CD14-positive monocyte (primary cell): ENCODE measurements at regions of chr1 and their contacts with region 1.

Region 1: DNA sequence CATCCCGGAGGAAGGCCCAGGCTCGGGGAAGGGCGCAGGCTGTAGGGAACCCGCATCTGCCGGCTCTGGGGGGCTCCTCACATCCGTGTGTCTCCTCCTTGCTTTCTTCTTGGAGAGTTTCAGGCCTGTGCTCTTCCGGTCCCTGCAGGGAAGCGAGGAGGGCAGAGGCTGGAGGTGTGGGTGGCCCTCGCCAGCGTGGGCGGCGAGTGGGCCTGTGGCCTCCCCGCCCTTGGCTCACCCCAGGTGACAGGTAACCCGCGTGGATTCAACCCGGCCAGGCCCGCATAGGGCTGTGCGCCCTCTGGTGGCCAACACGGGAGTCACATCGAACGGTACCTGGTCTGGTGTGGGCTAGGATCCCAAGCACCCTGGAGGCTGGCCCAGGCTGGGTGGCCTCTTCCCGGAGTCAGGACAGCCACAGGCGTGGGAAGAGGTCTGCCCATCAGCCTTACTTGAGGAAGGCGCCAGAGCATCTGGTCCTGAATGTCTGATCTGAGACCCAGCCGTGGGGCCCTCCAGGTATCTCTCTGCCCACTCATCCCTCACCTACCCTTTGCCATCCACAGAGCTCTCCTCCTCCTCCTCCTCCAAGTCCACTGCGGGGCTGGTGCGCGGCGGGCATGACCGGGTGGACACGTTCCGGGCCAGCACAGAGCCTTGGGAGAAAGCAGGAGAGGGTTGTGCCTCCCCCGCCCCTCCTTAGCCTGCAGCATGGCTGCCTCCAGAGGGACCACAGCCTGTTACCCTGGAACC is 9.6 kb upstream of the TNFRSF25 start:
- DNase-seq: peak; percentile 14 to 43 (median 33)
- H3K4me3 ChIP-seq: no peak overlapping the region
- H3K4me3 Mint-ChIP-seq: no peak overlapping the region
- H3K27ac ChIP-seq: no peak overlapping the region
- H3K27ac Mint-ChIP-seq: peak overlapping the region in 1 of 7 donors; percentile 68
- H3K4me1 ChIP-seq: no peaks in the 10 kb centered on the region
- H3K4me1 Mint-ChIP-seq: no peaks in the 10 kb centered on the region
- H3K27me3 ChIP-seq: no peaks in the 10 kb centered on the region
- H3K27me3 Mint-ChIP-seq: peaks cover 6 to 9% (median 6%) of the 10 kb centered on the region in 3 donors
- CTCF ChIP-seq: peak; percentile 97

Region 2: GRCh38 chr1:6770751-6771440 is 295.3 kb after region 1 on chr1:
- intact Hi-C with region 1: no loop called
- DNase-seq: no peak
- H3K4me3 ChIP-seq: no peak overlapping the region
- H3K4me3 Mint-ChIP-seq: no peak overlapping the region
- H3K27ac ChIP-seq: no peak overlapping the region
- H3K27ac Mint-ChIP-seq: no peak overlapping the region
- H3K4me1 ChIP-seq: no peaks in the 10 kb centered on the region
- H3K4me1 Mint-ChIP-seq: peaks cover 4% of the 10 kb centered on the region
- H3K27me3 ChIP-seq: no peaks in the 10 kb centered on the region
- H3K27me3 Mint-ChIP-seq: peaks cover 5 to 11% (median 9%) of the 10 kb centered on the region in 3 donors
- CTCF ChIP-seq: no peak

Region 3: GRCh38 chr1:7002728-7003127 is 527.2 kb after region 1 on chr1:
- intact Hi-C with region 1: loop called in 1 of 2 experiments (anchors 5 kb)
- DNase-seq: no peak
- H3K4me3 ChIP-seq: no peak overlapping the region
- H3K4me3 Mint-ChIP-seq: no peak overlapping the region
- H3K27ac ChIP-seq: no peak overlapping the region
- H3K27ac Mint-ChIP-seq: no peak overlapping the region
- H3K4me1 ChIP-seq: no peaks in the 10 kb centered on the region
- H3K4me1 Mint-ChIP-seq: no peaks in the 10 kb centered on the region
- H3K27me3 ChIP-seq: no peaks in the 10 kb centered on the region
- H3K27me3 Mint-ChIP-seq: peaks cover 0 to 8% (median 0%) of the 10 kb centered on the region in 3 donors
- CTCF ChIP-seq: no peak